ENCODE measurements at regions of chr2 and their contacts with region 1.

Region 1: DNA sequence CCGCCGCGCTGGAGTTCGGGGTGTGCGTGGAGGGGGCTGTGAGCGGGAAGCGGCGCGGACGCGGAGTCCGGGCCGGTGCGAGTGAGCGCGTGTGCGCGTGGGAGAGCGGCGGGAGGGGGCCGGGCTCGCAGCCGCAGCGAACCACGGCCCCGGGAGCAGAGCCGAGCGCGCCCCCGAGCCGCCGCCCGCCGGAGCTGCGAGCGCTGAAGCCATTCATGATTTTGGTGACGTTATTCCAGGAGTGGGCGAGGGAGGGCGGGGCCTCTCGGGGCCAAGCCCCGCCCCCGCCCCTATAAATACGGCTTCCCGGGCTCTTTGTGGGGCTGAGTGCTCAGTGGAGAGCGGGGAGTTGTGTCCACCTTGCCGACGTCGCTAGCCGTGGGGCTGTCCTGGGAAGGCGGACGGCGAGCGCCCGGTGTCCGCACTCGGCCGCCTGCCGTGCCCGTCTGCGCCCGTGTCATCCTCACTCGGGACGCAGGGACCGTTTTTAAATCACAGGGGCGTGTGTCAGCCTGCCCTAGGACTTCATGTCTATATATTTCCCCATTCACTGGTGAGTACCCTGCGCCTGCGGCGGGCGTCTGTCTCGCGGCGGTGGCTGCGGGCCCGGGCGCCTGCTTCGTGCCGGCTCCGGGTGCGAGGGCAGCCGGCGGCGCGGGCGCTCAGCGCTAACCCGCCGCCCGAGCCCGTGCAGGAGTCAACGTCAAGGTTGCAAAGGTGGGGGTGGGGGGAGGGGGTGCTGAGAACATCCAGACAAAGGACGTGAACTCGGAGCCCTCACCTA is at the start of gene LBH:
- DNase-seq: peak; percentile 81
- H3K4me3 ChIP-seq: peak within 1 kb of the TSS; percentile 60
- H3K27ac ChIP-seq: peak within 1 kb of the TSS; percentile 76
- H3K4me1 ChIP-seq: no peaks in the 10 kb centered on the region
- H3K27me3 ChIP-seq: peaks cover 30% of the 10 kb centered on the region
- CTCF ChIP-seq: no peak
- total RNA-seq, gene LBH: 8.7 to 16.1 TPM

Region 2: DNA sequence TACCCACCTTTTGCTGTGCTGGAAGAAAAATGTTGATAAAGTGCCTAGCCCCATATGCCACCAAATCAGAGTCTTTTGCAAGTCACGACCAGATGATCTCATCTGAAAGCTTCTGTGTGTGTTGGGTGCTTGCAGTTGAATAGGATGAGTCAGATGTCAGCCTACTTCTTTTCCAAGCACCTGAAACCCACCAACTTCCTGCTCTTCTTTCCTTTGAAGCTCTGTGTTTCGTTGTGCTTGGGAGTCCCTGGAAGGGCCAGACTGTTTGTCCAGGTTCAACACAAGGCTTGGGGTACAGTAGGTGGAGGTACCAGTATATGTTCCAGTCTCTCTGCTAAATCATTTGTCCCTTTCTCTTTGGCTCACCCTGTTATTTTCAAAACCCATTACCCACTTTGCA is 178.8 kb after region 1 on chr2:
- intact Hi-C with region 1: no loop called
- DNase-seq: no peak
- H3K4me3 ChIP-seq: no peak overlapping the region
- H3K27ac ChIP-seq: no peak overlapping the region
- H3K4me1 ChIP-seq: no peaks in the 10 kb centered on the region
- H3K27me3 ChIP-seq: no peaks in the 10 kb centered on the region
- CTCF ChIP-seq: no peak

Region 3: DNA sequence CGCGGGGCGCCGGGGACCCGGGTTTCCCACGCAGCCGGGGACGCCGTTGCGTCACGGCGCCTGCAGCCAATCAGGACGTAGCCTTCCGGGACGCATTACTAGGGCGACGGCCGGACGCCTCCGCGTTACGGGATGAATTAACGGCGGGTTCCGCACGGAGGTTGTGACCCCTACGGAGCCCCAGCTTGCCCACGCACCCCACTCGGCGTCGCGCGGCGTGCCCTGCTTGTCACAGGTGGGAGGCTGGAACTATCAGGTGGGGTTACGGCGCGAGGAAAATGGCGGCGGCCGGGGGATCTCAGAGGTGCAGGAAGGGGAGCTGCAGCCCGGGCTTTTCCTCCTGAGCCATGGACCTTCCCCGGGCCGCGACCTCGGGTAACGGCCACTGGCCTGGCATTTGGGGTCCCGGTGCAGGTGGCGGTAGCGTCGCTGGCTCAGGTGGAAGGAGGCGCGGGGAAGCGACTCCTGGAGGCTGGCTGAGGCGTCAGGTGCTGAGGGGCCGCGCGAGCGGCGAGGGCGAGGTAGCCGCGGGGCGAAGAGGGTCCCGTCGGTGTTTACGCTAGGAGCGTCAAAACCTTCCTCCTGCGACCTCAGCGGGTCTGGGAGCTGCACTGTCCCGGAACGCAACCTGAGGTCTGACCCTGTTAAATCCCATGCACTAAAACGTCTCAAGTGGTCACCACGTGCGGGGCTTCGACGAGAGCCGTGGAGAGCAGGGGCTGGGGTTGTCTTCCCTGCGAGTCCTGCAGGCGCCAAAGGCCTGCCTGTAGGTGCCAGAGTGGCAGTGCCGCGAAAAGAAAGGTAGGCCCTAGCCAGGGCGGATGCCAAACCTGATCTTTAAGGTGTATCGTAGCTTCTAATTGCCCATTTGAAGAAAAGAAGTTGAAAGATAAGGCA is 216.0 kb after region 1 on chr2 and contains the start of gene LCLAT1:
- intact Hi-C with region 1: loop called (anchors 10 kb)
- DNase-seq: peak; percentile 86
- H3K4me3 ChIP-seq: peak within 1 kb of the TSS; percentile 75
- H3K27ac ChIP-seq: peak within 1 kb of the TSS; percentile 14
- H3K4me1 ChIP-seq: no peaks in the 10 kb centered on the region
- H3K27me3 ChIP-seq: no peaks in the 10 kb centered on the region
- CTCF ChIP-seq: no peak
- total RNA-seq, gene LCLAT1: 20.0 to 25.5 TPM